Head of caudate nucleus (tissue), 42 donors: ENCODE measurements at regions of chr19 and their contacts with region 1.

Region 1: DNA sequence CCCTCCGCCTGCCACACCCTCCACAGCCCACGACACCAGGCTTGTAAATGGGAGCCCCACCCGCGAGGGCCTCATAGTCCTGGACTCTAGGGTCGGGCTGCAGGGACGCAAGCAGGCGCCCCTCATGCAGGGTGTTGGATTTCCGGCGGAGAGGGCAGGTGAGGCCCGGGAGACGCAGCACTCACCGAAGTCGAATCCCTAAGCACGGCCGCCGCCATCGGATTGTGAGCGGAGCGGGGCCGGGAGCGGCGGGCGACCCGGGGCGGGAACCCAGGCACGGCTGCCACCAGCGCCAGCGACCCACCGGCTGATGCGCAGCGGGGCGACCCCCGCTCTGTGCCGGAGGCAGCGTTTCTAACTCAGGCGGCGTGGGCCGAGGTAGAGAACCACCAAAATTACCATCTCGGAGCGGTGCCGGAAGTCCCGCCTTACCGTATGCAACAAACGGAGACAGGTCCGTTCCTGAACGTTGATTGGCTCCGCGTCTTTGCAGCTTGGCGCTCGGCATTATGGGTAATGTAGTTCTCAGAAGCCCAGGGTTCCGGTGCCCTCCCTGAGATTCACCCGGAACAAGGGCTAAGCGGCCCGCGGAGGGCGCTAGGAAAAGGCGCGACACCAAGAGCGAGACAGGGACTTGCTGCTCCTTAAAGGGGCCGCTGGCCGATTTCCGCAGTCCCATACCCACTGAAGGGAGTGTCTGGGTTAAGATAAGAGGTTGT is at the start of gene ZNF416:
- DNase-seq: peak; percentile 96 to 100 (median 98)

Region 2: GRCh38 chr19:57632987-57633831 is 54.6 kb after region 1 on chr19 and contains the start of gene ZNF211:
- intact Hi-C with region 1: loop called (anchors 10 kb)
- DNase-seq: peak; percentile 90 to 97 (median 94)